Activated CD8-positive, alpha-beta memory T cell treated with anti-CD3 and anti-CD28 coated beads, Interleukin-2, amount 10 ng/mL, durations not matched to agents 7 days and 5 days (primary cell): ENCODE measurements at regions of chr19 and their contacts with region 1.

Region 1: GRCh38 chr19:11125994-11126685 is 29.4 kb downstream of the SPC24 start:
- DNase-seq: peak; percentile 85
- ATAC-seq: peak; percentile 80
- H3K4me3 Mint-ChIP-seq: no peak overlapping the region
- H3K27ac Mint-ChIP-seq: no peak overlapping the region
- H3K4me1 Mint-ChIP-seq: peaks cover 2% of the 10 kb centered on the region
- H3K27me3 Mint-ChIP-seq: no peaks in the 10 kb centered on the region

Region 2: DNA sequence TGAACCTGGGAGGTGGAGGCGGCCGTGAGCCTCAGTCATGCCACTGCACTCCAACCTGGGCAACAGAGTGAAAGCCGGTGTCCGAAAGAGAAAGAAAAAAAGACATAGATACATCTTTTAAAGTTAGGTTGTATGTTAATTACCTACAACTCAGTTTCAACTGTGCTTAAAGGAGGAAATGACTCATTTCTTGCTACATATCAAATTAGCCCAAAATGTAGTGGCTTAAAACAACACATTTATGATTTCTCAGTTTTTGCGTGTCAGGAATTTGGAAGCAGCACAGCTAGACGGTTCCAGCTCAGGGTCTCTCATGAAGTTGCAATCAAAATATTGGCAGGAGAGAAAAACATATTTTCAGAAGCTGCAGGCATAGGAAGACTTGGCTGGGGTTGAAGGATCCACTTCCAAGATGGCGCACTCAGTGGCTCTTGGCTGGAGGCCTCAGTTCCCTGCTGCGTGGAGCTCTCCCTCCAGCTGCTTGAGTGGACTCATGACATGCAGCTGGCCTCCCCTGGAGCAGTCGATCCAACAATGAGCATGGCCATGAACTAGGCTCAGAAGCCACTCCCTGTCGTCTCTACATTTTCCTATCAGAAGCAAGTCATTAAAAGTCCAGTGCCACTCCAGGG is 29.8 kb before region 1 on chr19:
- CTCF ChIA-PET with region 1: interaction called, 11 read pairs
- DNase-seq: peak; percentile 72
- ATAC-seq: peak; percentile 54
- H3K4me3 Mint-ChIP-seq: peak overlapping the region; percentile 66
- H3K27ac Mint-ChIP-seq: peak overlapping the region; percentile 96
- H3K4me1 Mint-ChIP-seq: peaks cover 69% of the 10 kb centered on the region
- H3K27me3 Mint-ChIP-seq: no peaks in the 10 kb centered on the region

Region 3: DNA sequence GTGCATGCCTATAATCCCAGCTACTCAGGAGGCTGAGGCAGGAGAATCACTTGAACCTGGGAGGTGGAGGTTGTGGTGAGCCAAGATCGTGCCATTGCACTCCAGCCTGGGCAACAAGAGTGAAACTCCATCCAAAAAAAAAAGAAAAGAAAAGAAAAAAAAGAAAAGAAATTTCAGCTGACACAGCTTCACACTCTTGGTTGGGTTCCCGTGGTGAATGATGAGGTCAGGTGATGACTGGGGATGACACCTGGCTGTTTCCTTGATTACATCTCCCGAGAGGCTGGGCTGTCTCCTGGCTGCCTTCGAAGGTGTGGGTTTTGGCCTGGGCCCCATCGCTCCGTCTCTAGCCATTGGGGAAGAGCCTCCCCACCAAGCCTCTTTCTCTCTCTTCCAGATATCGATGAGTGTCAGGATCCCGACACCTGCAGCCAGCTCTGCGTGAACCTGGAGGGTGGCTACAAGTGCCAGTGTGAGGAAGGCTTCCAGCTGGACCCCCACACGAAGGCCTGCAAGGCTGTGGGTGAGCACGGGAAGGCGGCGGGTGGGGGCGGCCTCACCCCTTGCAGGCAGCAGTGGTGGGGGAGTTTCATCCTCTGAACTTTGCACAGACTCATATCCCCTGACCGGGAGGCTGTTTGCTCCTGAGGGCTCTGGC is 14.9 kb before region 1 on chr19:
- CTCF ChIA-PET with region 1: interaction called, 12 read pairs
- DNase-seq: no peak
- ATAC-seq: peak; percentile 21
- H3K4me3 Mint-ChIP-seq: no peak overlapping the region
- H3K27ac Mint-ChIP-seq: no peak overlapping the region
- H3K4me1 Mint-ChIP-seq: no peaks in the 10 kb centered on the region
- H3K27me3 Mint-ChIP-seq: no peaks in the 10 kb centered on the region

Region 4: GRCh38 chr19:11136400-11137101 is 10.4 kb after region 1 on chr19:
- CTCF ChIA-PET with region 1: interaction called, 10 read pairs
- DNase-seq: no peak
- ATAC-seq: no peak
- H3K4me3 Mint-ChIP-seq: no peak overlapping the region
- H3K27ac Mint-ChIP-seq: no peak overlapping the region
- H3K4me1 Mint-ChIP-seq: peaks cover 8% of the 10 kb centered on the region
- H3K27me3 Mint-ChIP-seq: no peaks in the 10 kb centered on the region

Region 5: DNA sequence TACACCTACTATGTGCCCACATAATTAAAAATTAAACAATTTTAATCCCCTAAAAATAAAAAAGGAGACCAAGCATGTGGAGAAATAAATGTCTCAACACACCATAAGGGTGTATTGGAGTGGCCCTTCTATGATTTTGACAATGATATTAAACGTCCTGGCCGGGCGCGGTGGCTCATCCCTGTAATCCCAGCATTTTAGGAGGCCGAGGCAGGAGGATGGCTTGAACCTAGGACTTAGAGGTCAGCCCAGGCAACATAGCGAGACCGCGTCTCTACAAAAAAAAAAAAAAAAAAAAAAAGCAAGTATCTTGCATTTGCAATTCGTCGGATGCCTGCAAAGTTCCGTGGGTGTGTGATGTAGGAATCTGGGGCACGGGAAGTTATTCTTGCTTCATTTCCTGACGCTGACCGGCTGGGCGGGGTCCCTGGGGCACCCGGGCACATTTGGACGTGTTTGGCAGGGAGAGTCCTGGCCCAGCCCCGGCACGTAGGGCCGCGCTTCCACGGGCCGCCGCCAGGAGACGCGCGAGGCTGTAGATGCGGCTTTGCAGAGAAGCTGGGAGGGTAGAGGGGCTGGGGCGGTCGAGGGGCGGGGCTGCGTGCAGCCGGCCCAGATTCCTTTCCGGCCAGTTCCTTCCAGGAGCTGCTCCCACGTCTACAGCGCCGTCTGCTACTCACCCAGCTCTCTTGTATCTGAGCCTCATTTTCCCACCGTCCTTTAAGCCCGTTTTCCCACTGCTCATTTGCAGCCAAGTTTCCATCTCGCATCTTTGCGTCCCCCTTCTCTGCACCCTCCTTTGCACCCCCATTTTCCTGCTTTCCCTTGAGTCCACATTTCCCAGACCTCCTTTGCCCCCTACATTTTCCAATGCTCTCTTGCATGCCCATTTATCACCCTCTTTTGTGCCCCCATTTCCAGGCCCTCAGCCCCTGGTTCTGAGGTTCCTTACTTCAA is 167.6 kb after region 1 on chr19:
- CTCF ChIA-PET with region 1: no interaction called
- DNase-seq: peak; percentile 82
- ATAC-seq: peak; percentile 97
- H3K4me3 Mint-ChIP-seq: peak overlapping the region; percentile 43
- H3K27ac Mint-ChIP-seq: no peak overlapping the region
- H3K4me1 Mint-ChIP-seq: peaks cover 5% of the 10 kb centered on the region
- H3K27me3 Mint-ChIP-seq: peaks cover 57% of the 10 kb centered on the region

Region 6: DNA sequence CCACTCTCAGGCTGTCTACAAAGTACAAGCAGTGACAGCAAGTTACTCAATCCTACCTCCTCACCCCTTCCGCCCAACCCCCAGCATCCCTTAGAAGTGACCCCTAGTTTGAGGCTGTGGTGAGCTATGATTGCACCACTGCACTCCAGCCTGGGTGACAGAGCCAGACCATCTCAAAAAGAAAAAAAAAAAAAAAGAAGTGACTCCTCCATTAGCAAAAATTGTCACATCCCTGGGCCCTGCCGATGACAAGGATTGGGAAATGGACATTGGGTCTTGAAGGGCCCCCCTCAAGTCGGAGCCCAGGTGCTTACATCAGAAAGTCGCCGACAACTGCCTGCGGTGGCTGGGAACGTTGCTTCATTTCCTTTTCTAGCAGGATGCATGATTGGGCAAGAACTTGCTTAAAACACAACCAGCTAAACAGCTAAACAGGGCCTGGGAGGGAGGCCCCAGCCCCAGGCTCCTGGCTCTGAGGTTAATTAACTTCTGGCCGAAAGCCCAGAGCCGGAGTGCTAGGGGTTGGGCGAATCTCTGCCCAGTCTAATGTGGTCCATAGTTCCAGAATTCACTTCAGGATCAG is 198.0 kb after region 1 on chr19:
- CTCF ChIA-PET with region 1: no interaction called
- DNase-seq: peak; percentile 86
- ATAC-seq: peak; percentile 89
- H3K4me3 Mint-ChIP-seq: peak overlapping the region; percentile 60
- H3K27ac Mint-ChIP-seq: peak overlapping the region; percentile 92
- H3K4me1 Mint-ChIP-seq: peaks cover 30% of the 10 kb centered on the region
- H3K27me3 Mint-ChIP-seq: peaks cover 3% of the 10 kb centered on the region